CD4-positive, alpha-beta T cell (primary cell): ENCODE measurements at regions of chr16 and their contacts with region 1.

Region 1: DNA sequence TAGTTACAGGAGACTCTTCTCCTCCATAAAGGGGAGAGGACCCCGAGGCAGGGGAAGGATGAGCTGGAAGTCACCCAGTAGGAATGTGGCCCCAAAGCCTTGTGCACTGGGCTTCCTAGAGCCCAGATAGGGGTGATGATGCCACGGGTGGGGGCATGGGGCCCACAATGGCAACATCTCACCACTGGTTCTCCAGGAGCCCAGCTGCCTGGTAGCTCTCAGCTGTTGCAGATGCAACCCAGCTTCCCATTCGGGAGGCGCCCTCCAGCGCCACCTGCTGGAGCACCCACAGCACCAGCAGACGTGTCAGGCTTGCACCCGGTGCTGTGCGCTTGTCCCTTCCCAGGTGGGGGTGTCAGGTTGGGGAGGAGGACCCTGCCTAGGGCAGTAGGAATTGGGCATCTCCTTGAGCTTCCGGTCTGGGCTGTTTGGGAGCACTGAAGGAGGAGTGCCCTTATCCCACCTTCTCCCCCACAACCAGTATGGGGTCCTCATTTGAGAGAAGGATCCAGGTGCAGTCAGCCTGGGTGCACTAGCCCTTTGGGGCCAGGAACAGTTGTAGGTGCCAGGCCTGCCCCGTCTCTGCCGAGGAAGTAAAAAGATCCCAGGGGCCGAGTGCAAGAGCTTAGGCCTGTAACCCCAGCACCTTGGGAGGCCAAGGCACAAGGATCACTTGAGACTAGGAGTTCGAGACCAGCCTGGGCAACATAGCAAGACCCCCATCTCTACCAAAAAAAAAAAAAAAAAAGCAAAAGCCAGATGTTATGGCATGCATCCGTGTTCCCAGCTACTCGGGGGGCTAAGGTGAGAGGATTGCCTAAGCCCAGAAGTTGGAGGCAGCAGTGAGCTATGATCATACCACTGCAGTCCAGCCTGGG is 14.4 kb downstream of the CDIPT start:
- DNase-seq: peak; percentile 74 to 93 (median 82)
- ATAC-seq: peak; percentile 97
- H3K4me3 ChIP-seq: no peak overlapping the region
- H3K4me3 Mint-ChIP-seq: no peak overlapping the region
- H3K27ac ChIP-seq: no peak overlapping the region
- H3K27ac Mint-ChIP-seq: no peak overlapping the region
- H3K4me1 ChIP-seq: peaks cover 7% of the 10 kb centered on the region
- H3K4me1 Mint-ChIP-seq: peaks cover 7% of the 10 kb centered on the region
- H3K27me3 ChIP-seq: no peaks in the 10 kb centered on the region
- H3K27me3 Mint-ChIP-seq: no peaks in the 10 kb centered on the region
- CTCF ChIP-seq: peak; percentile 92

Region 2: DNA sequence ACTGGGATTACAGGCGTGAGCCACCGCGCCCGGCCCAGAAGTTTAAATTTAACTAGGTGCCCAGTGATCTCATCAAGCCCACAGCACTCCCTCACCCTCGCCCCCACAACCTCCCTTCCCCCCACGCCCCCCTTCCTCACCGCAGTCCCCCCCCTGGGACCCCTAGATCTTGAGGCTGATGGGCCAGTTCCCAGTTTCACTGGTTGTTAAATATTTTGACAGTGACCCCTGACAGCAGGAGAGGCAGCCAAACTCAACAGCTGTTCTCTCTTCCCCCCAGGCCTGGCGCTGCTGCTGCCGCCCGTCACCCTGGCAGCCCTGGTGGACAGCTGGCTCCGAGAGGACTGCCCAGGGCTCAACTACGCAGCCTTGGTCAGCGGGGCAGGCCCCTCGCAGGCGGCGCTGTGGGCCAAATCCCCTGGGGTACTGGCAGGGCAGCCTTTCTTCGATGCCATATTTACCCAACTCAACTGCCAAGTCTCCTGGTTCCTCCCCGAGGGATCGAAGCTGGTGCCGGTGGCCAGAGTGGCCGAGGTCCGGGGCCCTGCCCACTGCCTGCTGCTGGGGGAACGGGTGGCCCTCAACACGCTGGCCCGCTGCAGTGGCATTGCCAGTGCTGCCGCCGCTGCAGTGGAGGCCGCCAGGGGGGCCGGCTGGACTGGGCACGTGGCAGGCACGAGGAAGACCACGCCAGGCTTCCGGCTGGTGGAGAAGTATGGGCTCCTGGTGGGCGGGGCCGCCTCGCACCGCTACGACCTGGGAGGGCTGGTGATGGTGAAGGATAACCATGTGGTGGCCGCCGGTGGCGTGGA is 154.1 kb before region 1 on chr16:
- CTCF ChIA-PET with region 1: interaction called, 49 read pairs
- POLR2A ChIA-PET with region 1: no interaction called
- intact Hi-C with region 1: loop called in 1 of 2 experiments (anchors 2 kb)
- DNase-seq: no peak
- ATAC-seq: no peak
- H3K4me3 ChIP-seq: no peak overlapping the region
- H3K4me3 Mint-ChIP-seq: no peak overlapping the region
- H3K27ac ChIP-seq: no peak overlapping the region
- H3K27ac Mint-ChIP-seq: no peak overlapping the region
- H3K4me1 ChIP-seq: peaks cover 7% of the 10 kb centered on the region
- H3K4me1 Mint-ChIP-seq: peaks cover 11% of the 10 kb centered on the region
- H3K27me3 ChIP-seq: no peaks in the 10 kb centered on the region
- H3K27me3 Mint-ChIP-seq: no peaks in the 10 kb centered on the region
- CTCF ChIP-seq: no peak

Region 3: GRCh38 chr16:29784901-29785500 is 63.7 kb before region 1 on chr16:
- CTCF ChIA-PET with region 1: interaction called, 17 read pairs
- POLR2A ChIA-PET with region 1: interaction called, 6 read pairs
- intact Hi-C with region 1: no loop called
- DNase-seq: peak; percentile 55 to 87 (median 74)
- ATAC-seq: peak; percentile 91
- H3K4me3 ChIP-seq: peak overlapping the region; percentile 40
- H3K4me3 Mint-ChIP-seq: peak overlapping the region; percentile 80
- H3K27ac ChIP-seq: no peak overlapping the region
- H3K27ac Mint-ChIP-seq: peak overlapping the region; percentile 18
- H3K4me1 ChIP-seq: peaks cover 25% of the 10 kb centered on the region
- H3K4me1 Mint-ChIP-seq: peaks cover 33% of the 10 kb centered on the region
- H3K27me3 ChIP-seq: no peaks in the 10 kb centered on the region
- H3K27me3 Mint-ChIP-seq: no peaks in the 10 kb centered on the region
- CTCF ChIP-seq: peak; percentile 85

Region 4: DNA sequence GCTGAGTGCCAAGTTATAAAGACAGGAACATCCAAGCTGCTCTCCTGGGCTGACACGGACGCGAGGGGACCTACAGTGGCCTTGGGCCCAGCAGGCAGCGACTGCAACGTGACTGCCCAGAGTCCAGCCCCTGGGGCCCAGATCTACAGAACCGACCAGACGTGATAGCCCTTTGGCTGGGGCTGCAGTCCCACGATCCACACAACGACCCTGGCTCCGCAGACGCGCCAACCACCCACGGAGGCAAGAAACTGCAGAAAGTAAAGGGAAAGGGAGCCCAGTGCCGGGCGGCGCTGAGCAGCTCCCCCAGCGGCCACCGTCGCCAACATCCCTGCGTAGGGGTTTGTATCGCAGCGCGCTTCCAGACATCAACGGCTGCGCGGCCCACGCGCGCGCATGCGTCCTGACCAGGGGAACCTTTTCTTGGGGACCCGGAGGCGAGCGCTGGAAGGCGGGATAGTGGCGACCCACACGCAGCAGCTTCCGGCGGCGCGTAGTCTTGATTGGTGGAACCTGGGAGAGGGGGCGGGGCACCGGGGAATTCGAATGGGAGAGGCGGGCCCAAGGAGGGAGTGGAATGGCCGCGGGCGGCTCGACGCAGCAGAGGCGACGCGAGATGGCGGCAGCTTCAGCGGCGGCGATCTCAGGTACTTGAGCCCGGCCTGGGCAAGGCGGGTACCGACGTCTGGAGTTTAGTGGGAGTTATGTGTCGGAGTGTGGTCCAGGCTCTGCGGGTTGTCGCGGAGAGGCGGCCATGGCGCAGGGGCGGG is 58.3 kb before region 1 on chr16 and contains the start of gene KIF22:
- CTCF ChIA-PET with region 1: interaction called, 17 read pairs
- POLR2A ChIA-PET with region 1: interaction called, 6 read pairs
- intact Hi-C with region 1: no loop called
- DNase-seq: peak; percentile 99 to 100 (median 100)
- ATAC-seq: peak; percentile 90
- H3K4me3 ChIP-seq: peak within 1 kb of the TSS; percentile 93
- H3K4me3 Mint-ChIP-seq: peak within 1 kb of the TSS; percentile 96
- H3K27ac ChIP-seq: peak within 1 kb of the TSS; percentile 82 to 83
- H3K27ac Mint-ChIP-seq: peak within 1 kb of the TSS; percentile 97
- H3K4me1 ChIP-seq: peaks cover 43% of the 10 kb centered on the region
- H3K4me1 Mint-ChIP-seq: peaks cover 51% of the 10 kb centered on the region
- H3K27me3 ChIP-seq: no peaks in the 10 kb centered on the region
- H3K27me3 Mint-ChIP-seq: no peaks in the 10 kb centered on the region
- CTCF ChIP-seq: peak; percentile 80
- total RNA-seq, gene KIF22: 99.0 to 101 TPM

Region 5: GRCh38 chr16:29815793-29816693 is 32.6 kb before region 1 on chr16 and contains the start of gene PAGR1:
- CTCF ChIA-PET with region 1: interaction called, 33 read pairs
- POLR2A ChIA-PET with region 1: interaction called, 40 read pairs
- intact Hi-C with region 1: loop called in 1 of 2 experiments (anchors 1 kb)
- DNase-seq: peak; percentile 97 to 100 (median 98)
- ATAC-seq: peak; percentile 73
- H3K4me3 ChIP-seq: peak within 1 kb of the TSS; percentile 95
- H3K4me3 Mint-ChIP-seq: peak within 1 kb of the TSS; percentile 97
- H3K27ac ChIP-seq: peak within 1 kb of the TSS; percentile 84 to 94
- H3K27ac Mint-ChIP-seq: peak within 1 kb of the TSS; percentile 90
- H3K4me1 ChIP-seq: peaks cover 92% of the 10 kb centered on the region
- H3K4me1 Mint-ChIP-seq: peaks cover 83% of the 10 kb centered on the region
- H3K27me3 ChIP-seq: no peaks in the 10 kb centered on the region
- H3K27me3 Mint-ChIP-seq: no peaks in the 10 kb centered on the region
- CTCF ChIP-seq: peak; percentile 97
- total RNA-seq, gene PAGR1: 20.3 TPM

Region 6: GRCh38 chr16:29825145-29826044 is 23.3 kb before region 1 on chr16:
- CTCF ChIA-PET with region 1: interaction called, 45 read pairs
- POLR2A ChIA-PET with region 1: interaction called, 27 read pairs
- intact Hi-C with region 1: no loop called
- DNase-seq: peak in 6 of 14 experiments; percentile 18 to 64 (median 48)
- ATAC-seq: peak; percentile 22
- H3K4me3 ChIP-seq: peak overlapping the region; percentile 13
- H3K4me3 Mint-ChIP-seq: peak overlapping the region; percentile 84
- H3K27ac ChIP-seq: peak overlapping the region; percentile 14 to 40
- H3K27ac Mint-ChIP-seq: peak overlapping the region; percentile 83
- H3K4me1 ChIP-seq: peaks cover 100% of the 10 kb centered on the region
- H3K4me1 Mint-ChIP-seq: peaks cover 79% of the 10 kb centered on the region
- H3K27me3 ChIP-seq: no peaks in the 10 kb centered on the region
- H3K27me3 Mint-ChIP-seq: no peaks in the 10 kb centered on the region
- CTCF ChIP-seq: no peak

Region 7: GRCh38 chr16:29891525-29892457 is 43.1 kb after region 1 on chr16:
- CTCF ChIA-PET with region 1: no interaction called
- POLR2A ChIA-PET with region 1: no interaction called
- intact Hi-C with region 1: no loop called
- DNase-seq: no peak
- ATAC-seq: no peak
- H3K4me3 ChIP-seq: no peak overlapping the region
- H3K4me3 Mint-ChIP-seq: no peak overlapping the region
- H3K27ac ChIP-seq: no peak overlapping the region
- H3K27ac Mint-ChIP-seq: no peak overlapping the region
- H3K4me1 ChIP-seq: no peaks in the 10 kb centered on the region
- H3K4me1 Mint-ChIP-seq: no peaks in the 10 kb centered on the region
- H3K27me3 ChIP-seq: peaks cover 0 to under 1% of the 10 kb centered on the region in 2 experiments
- H3K27me3 Mint-ChIP-seq: peaks cover 13% of the 10 kb centered on the region
- CTCF ChIP-seq: no peak

Region 8: GRCh38 chr16:30024451-30024850 is 175.8 kb after region 1 on chr16:
- CTCF ChIA-PET with region 1: no interaction called
- POLR2A ChIA-PET with region 1: no interaction called
- intact Hi-C with region 1: loop called in 1 of 2 experiments (anchors 5 kb)
- DNase-seq: no peak
- ATAC-seq: no peak
- H3K4me3 ChIP-seq: no peak overlapping the region
- H3K4me3 Mint-ChIP-seq: no peak overlapping the region
- H3K27ac ChIP-seq: no peak overlapping the region
- H3K27ac Mint-ChIP-seq: no peak overlapping the region
- H3K4me1 ChIP-seq: peaks cover 13% of the 10 kb centered on the region
- H3K4me1 Mint-ChIP-seq: peaks cover 12% of the 10 kb centered on the region
- H3K27me3 ChIP-seq: peaks cover 11 to 21% of the 10 kb centered on the region in 2 experiments
- H3K27me3 Mint-ChIP-seq: peaks cover 25% of the 10 kb centered on the region
- CTCF ChIP-seq: no peak

Region 9: GRCh38 chr16:30650369-30651123 is 801.9 kb after region 1 on chr16 and contains the start of gene PRR14:
- CTCF ChIA-PET with region 1: no interaction called
- POLR2A ChIA-PET with region 1: no interaction called
- intact Hi-C with region 1: no loop called
- DNase-seq: peak; percentile 96 to 99 (median 98)
- ATAC-seq: peak; percentile 89
- H3K4me3 ChIP-seq: peak within 1 kb of the TSS; percentile 86
- H3K4me3 Mint-ChIP-seq: peak within 1 kb of the TSS; percentile 99
- H3K27ac ChIP-seq: peak within 1 kb of the TSS; percentile 84 to 96
- H3K27ac Mint-ChIP-seq: peak within 1 kb of the TSS; percentile 95
- H3K4me1 ChIP-seq: peaks cover 30% of the 10 kb centered on the region
- H3K4me1 Mint-ChIP-seq: peaks cover 22% of the 10 kb centered on the region
- H3K27me3 ChIP-seq: no peaks in the 10 kb centered on the region
- H3K27me3 Mint-ChIP-seq: no peaks in the 10 kb centered on the region
- CTCF ChIP-seq: no peak
- total RNA-seq, gene PRR14: 50.2 to 51.7 TPM